ENCODE measurements at regions of chr7 and their contacts with region 1.

Region 1: DNA sequence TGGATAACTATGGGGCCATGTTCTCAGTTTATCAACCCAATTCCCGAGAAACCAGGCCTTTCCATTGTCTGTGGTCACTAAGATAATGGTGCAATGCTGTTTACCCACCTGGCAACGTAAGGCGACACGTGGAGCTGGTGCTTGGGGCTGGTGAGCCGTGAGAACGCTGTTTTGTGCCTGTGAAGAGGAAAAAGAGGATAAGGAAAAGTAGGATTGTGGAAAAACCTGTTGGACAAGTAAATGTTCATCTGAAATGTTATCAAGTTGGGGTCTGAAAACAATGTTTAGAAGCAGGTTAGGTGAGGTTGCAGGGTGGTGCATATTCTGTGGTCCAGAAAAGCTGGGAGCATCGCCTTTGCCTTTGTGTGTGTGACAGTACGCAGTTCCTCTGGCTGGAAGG is 88.5 kb downstream of the PPP1R17 start:
- DNase-seq: no peak
- H3K4me3 ChIP-seq: no peak overlapping the region
- H3K27ac ChIP-seq: no peak overlapping the region
- H3K4me1 ChIP-seq: no peaks in the 10 kb centered on the region
- H3K27me3 ChIP-seq: no peaks in the 10 kb centered on the region
- CTCF ChIP-seq: no peak
- EP300 ChIP-seq: no peak
- POLR2A ChIP-seq: no peak

Region 2: DNA sequence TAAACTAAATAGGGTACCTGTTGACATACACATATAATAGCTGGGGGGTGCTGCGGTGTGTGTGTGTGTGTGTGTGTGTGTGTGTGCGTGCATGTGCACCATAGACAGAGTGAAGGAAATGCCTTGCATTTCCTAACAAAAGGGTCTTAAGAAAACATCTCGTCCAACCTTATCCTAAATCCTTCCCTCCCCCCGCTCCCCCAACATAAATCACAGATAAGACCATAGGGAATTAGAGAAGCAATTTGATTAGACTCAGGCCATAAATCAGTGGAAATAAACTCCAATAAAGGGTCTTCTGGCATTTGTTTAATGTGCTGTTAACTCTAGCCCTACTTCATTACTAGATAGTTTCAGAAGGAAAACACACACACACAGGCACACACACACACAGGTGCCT is 59.9 kb after region 1 on chr7:
- in situ Hi-C with region 1: no loop called
- intact Hi-C with region 1: loop called (anchors 2 kb)
- DNase-seq: no peak
- H3K4me3 ChIP-seq: no peak overlapping the region
- H3K27ac ChIP-seq: no peak overlapping the region
- H3K4me1 ChIP-seq: no peaks in the 10 kb centered on the region
- H3K27me3 ChIP-seq: no peaks in the 10 kb centered on the region
- CTCF ChIP-seq: no peak
- EP300 ChIP-seq: no peak
- POLR2A ChIP-seq: no peak